ENCODE measurements at regions of chr1 and their contacts with region 1.

Region 1: DNA sequence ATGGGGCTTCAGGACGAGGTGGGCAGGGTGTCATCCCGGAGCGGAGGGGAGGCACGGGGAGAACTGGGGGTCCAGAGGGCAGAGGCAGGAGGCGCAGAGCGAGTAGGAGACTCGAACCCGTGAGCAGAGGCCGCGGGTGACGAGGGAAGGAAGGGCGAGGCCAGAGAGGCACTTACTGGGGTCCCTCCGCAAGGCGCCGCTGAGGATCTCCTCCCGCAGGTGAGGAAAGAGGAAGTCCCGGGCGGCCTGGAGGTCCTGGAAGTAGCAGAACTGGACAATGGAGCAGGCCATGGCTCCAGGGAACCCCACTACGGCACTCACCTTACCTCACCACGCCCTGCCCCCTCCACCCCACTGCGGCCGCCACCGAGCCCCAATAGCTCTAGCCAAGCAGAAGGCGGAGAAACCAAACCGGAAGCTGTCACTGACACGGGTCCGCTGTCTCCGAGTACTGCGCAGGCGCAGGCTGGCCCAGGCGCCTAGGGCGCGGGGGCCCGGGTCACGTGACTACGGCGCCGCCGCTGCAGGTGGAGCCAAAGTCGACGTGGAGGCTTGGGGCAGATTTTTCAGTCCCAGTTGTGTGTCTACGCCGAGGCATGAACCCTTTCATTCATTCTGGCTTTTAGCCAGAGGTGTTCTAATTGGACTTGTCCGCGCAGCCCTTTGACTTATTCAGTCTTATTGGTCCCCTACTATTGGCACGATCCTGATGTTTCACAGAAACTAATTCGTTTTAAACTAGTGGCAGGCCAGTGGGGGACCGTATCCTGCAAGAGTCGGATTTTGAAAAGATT is at the start of gene RAB3GAP2:
- DNase-seq: peak; percentile 95 to 96
- ATAC-seq: peak; percentile 97 to 99 (median 98)
- H3K4me3 ChIP-seq: peak within 1 kb of the TSS; percentile 75 to 98 (median 84)
- H3K27ac ChIP-seq: peak within 1 kb of the TSS; percentile 48 to 97 (median 88)
- H3K4me1 ChIP-seq: peaks cover 0 to 41% (median 29%) of the 10 kb centered on the region in 9 donors
- H3K27me3 ChIP-seq: no peaks in the 10 kb centered on the region
- CTCF ChIP-seq: no peak
- total RNA-seq, gene RAB3GAP2: 21.9 to 35.8 (median 28.5) TPM

Region 2: DNA sequence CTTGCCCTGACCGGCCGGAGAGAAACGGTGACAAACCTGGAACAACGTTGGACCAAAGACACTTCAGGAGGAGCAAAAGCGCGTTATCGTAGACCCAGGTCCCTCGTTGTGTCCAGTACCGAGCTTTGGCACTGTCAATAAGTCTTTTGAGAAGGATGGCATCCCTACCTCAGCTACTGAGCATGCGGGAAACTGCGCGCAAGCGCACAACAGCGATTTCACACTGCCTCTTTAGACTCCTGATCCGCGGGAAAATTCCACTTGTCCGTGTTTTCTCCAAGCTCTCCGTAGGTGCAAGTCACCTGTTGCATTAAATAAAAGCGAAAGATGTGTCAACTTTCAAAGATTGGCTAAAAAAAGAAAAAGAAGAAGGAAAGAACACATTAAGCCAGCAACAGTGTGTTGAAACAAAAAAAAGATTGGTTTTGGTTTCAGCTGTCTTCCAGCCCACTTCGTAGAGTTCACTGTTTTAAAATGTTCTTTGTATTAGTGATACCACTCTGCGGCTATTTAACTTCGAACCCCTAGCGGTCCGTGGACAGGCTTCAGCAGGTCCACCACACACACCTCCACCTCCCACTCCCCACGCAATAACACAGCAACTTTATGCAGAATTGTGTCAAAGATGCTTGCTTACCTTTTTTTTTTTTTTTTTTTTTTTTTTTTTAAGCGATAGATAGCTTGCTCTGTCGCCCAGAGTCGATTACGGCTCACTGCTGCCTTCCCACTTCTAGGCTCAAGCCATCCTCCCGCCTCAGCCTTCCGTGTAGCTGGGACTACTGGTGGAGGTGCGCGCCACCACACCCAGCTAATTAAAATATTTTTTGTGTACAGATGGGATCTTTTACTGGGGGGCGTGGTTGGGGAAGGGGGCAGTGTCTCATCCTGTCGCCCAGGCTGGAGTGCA is 182.3 kb before region 1 on chr1 and contains the start of gene BPNT1:
- intact Hi-C with region 1: loop called in 1 of 10 experiments (anchors 5 kb)
- DNase-seq: peak; percentile 92 to 96
- ATAC-seq: peak; percentile 82 to 92 (median 86)
- H3K4me3 ChIP-seq: peak within 1 kb of the TSS; percentile 28 to 81 (median 67)
- H3K27ac ChIP-seq: peak within 1 kb of the TSS in 8 of 10 donors; percentile 32 to 84 (median 54)
- H3K4me1 ChIP-seq: peaks cover 0 to 26% (median 10%) of the 10 kb centered on the region in 9 donors
- H3K27me3 ChIP-seq: no peaks in the 10 kb centered on the region
- CTCF ChIP-seq: no peak
- total RNA-seq, gene BPNT1: 13.8 to 21.0 (median 19.2) TPM

Region 3: DNA sequence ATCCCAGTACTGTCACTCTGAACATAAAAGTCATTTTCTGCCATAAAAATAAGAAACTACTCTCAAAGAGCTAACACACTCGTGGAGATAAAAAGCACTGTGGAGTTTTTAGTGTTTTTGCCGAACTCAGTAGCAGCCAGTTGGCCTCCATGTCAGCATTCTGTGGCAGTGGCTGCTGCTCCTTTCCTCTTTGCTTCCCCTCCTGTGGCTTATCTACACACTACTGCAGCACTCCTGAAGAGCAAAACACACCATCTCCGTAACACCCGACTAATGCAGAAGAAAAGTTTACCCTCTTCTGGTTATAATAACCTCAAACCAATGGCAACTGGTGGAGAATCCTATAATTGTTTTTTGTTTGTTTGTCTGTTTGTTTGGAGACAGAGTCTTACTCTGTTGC is 44.9 kb before region 1 on chr1:
- intact Hi-C with region 1: loop called in 1 of 10 experiments (anchors 5 kb)
- DNase-seq: no peak
- ATAC-seq: no peak
- H3K4me3 ChIP-seq: no peak overlapping the region
- H3K27ac ChIP-seq: no peak overlapping the region
- H3K4me1 ChIP-seq: peaks cover 0 to 27% (median 14%) of the 10 kb centered on the region in 9 donors
- H3K27me3 ChIP-seq: no peaks in the 10 kb centered on the region
- CTCF ChIP-seq: no peak

Region 4: GRCh38 chr1:220655509-220655908 is 383.3 kb after region 1 on chr1:
- intact Hi-C with region 1: loop called in 1 of 10 experiments (anchors 10 kb)
- DNase-seq: no peak
- ATAC-seq: no peak
- H3K4me3 ChIP-seq: no peak overlapping the region
- H3K27ac ChIP-seq: no peak overlapping the region
- H3K4me1 ChIP-seq: peaks cover 0 to 17% (median 4%) of the 10 kb centered on the region in 9 donors
- H3K27me3 ChIP-seq: no peaks in the 10 kb centered on the region
- CTCF ChIP-seq: no peak

Region 5: GRCh38 chr1:220733090-220733601 is 460.9 kb after region 1 on chr1:
- intact Hi-C with region 1: loop called in 1 of 10 experiments (anchors 10 kb)
- DNase-seq: peak; percentile 74 to 92
- ATAC-seq: peak; percentile 93 to 98 (median 96)
- H3K4me3 ChIP-seq: peak overlapping the region in 9 of 10 donors; percentile 2 to 44 (median 35)
- H3K27ac ChIP-seq: peak overlapping the region; percentile 7 to 93 (median 78)
- H3K4me1 ChIP-seq: peaks cover 0 to 25% (median 18%) of the 10 kb centered on the region in 9 donors
- H3K27me3 ChIP-seq: no peaks in the 10 kb centered on the region
- CTCF ChIP-seq: peak; percentile 81 to 94 (median 90)

Measured in heart right ventricle (tissue), 16 donors.